GM12878 (cell line): ENCODE measurements at regions of chr11 and their contacts with region 1.

Region 1: GRCh38 chr11:117817368-117818040 is 7.0 kb downstream of the FXYD2 start:
- DNase-seq: peak; percentile 93
- ATAC-seq: peak; percentile 47
- H3K4me3 ChIP-seq: no peak overlapping the region
- H3K27ac ChIP-seq: peak overlapping the region; percentile 87
- H3K4me1 ChIP-seq: peaks cover 55% of the 10 kb centered on the region
- H3K27me3 ChIP-seq: no peaks in the 10 kb centered on the region
- CTCF ChIP-seq: peak; percentile 98 to 100 (median 99)
- EP300 ChIP-seq: no peak; a peak in 1 of 4 replicates
- POLR2A ChIP-seq: peak; percentile 4; the same call in 1 of the 2 replicates
- RAD21 ChIP-seq: peak; percentile 95

Region 2: GRCh38 chr11:117232092-117232878 is 585.2 kb before region 1 on chr11 and contains the start of gene RNF214:
- CTCF ChIA-PET with region 1: interaction called, 4 read pairs
- POLR2A ChIA-PET with region 1: no interaction called
- RAD21 ChIA-PET with region 1: interaction called, 3 read pairs
- SMC1A ChIA-PET with region 1: interaction called, 7 read pairs
- in situ Hi-C with region 1: no loop called
- intact Hi-C with region 1: loop called (anchors 5 kb)
- DNase-seq: peak; percentile 20
- ATAC-seq: peak; percentile 82
- H3K4me3 ChIP-seq: peak within 1 kb of the TSS; percentile 89
- H3K27ac ChIP-seq: peak within 1 kb of the TSS; percentile 87
- H3K4me1 ChIP-seq: peaks cover 9% of the 10 kb centered on the region
- H3K27me3 ChIP-seq: no peaks in the 10 kb centered on the region
- CTCF ChIP-seq: peak; percentile 77 to 88 (median 85); a peak in 5 of 6 replicates
- EP300 ChIP-seq: no peak
- POLR2A ChIP-seq: peak; percentile 77
- RAD21 ChIP-seq: peak; percentile 31; the same call in 1 of the 2 replicates
- polyA plus RNA-seq, gene RNF214: 4.8 to 6.2 TPM

Region 3: DNA sequence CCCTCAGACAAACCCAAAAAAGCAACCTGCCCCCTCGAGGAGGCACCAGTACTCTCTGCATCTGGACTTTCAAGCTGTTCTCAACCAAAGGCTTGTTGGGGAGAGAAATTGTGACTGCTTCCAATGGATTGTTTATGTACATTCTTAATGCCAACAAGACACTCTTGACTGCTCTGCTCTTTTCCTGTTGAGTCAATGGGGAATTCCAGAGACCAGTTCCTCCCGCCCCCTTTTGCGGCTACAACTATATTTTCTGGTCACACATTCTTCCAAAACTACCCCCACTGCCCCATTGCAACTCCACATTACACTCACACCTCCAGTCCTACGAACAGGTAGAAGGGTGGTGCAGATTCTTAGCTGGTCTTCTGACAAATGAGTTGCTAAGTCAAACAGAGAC is 207.5 kb before region 1 on chr11:
- CTCF ChIA-PET with region 1: interaction called, 7 read pairs
- POLR2A ChIA-PET with region 1: interaction called, 5 read pairs
- RAD21 ChIA-PET with region 1: interaction called, 6 read pairs
- SMC1A ChIA-PET with region 1: no interaction called
- in situ Hi-C with region 1: no loop called
- intact Hi-C with region 1: loop called (anchors 5 kb)
- DNase-seq: peak; percentile 70
- ATAC-seq: peak; percentile 47
- H3K4me3 ChIP-seq: peak overlapping the region; percentile 28; the same call in 1 of the 2 replicates
- H3K27ac ChIP-seq: peak overlapping the region; percentile 17; the same call in 1 of the 2 replicates
- H3K4me1 ChIP-seq: peaks cover 37% of the 10 kb centered on the region
- H3K27me3 ChIP-seq: no peaks in the 10 kb centered on the region
- CTCF ChIP-seq: 0 out of 6 replicates have a peak, but pooled peaks of 1 of the 3 experiments have one; percentile 2
- EP300 ChIP-seq: peak in 1 of 2 experiments; percentile 71; a peak in 1 of 4 replicates
- POLR2A ChIP-seq: no peak
- RAD21 ChIP-seq: no peak

Region 4: GRCh38 chr11:117900121-117900648 is 82.7 kb after region 1 on chr11:
- CTCF ChIA-PET with region 1: interaction called, 14 read pairs
- POLR2A ChIA-PET with region 1: no interaction called
- RAD21 ChIA-PET with region 1: interaction called, 10 read pairs
- SMC1A ChIA-PET with region 1: interaction called, 5 read pairs
- in situ Hi-C with region 1: no loop called
- intact Hi-C with region 1: no loop called
- DNase-seq: peak; percentile 60
- ATAC-seq: peak; percentile 93
- H3K4me3 ChIP-seq: no peak overlapping the region
- H3K27ac ChIP-seq: no peak overlapping the region
- H3K4me1 ChIP-seq: peaks cover 4% of the 10 kb centered on the region
- H3K27me3 ChIP-seq: no peaks in the 10 kb centered on the region
- CTCF ChIP-seq: no peak
- EP300 ChIP-seq: no peak
- POLR2A ChIP-seq: no peak
- RAD21 ChIP-seq: no peak

Region 5: DNA sequence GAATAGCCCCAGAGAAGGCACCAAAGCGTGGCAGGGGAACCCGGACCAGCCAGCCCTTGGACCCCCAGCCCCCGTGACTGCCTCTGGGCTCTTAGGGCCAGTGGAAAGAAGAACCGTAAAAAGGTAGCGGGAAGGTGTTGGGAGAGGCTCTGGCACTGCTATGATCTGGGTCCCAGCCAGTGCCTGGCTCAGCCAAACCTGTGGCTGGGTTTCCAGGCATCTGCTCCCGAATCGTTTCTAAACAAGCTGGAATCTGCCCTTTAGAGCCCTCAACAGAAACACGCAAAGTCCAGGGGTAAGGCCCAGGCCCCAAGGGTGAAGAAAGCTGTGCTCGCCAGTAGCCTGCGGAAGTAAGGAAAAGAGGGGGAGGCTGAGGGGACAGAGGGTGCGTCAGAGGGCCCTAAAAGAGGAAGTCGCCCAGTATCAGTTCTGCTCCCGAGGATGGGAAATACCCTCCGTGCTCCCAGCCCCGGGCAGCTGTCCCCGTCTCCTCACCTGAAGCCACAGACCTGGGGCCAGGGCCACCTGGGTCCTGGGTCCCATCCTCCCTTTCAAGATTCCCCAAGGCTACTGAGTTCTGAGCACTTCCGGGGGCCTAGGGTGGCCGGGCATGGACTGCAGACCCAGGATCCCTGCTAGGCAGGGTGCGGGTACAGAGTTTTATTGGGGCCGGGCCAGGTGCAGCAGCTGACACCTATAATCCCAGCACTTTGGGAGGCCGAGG is 193.4 kb after region 1 on chr11:
- CTCF ChIA-PET with region 1: interaction called, 4 read pairs
- POLR2A ChIA-PET with region 1: interaction called, 4 read pairs
- RAD21 ChIA-PET with region 1: interaction called, 8 read pairs
- SMC1A ChIA-PET with region 1: interaction called, 10 read pairs
- in situ Hi-C with region 1: no loop called
- intact Hi-C with region 1: no loop called
- DNase-seq: peak; percentile 86
- ATAC-seq: peak; percentile 85
- H3K4me3 ChIP-seq: no peak overlapping the region
- H3K27ac ChIP-seq: peak overlapping the region; percentile 97
- H3K4me1 ChIP-seq: peaks cover 80% of the 10 kb centered on the region
- H3K27me3 ChIP-seq: no peaks in the 10 kb centered on the region
- CTCF ChIP-seq: no peak
- EP300 ChIP-seq: peak; percentile 100
- POLR2A ChIP-seq: no peak
- RAD21 ChIP-seq: 0 out of 2 replicates have a peak, but pooled peaks have one; percentile 15

Region 6: DNA sequence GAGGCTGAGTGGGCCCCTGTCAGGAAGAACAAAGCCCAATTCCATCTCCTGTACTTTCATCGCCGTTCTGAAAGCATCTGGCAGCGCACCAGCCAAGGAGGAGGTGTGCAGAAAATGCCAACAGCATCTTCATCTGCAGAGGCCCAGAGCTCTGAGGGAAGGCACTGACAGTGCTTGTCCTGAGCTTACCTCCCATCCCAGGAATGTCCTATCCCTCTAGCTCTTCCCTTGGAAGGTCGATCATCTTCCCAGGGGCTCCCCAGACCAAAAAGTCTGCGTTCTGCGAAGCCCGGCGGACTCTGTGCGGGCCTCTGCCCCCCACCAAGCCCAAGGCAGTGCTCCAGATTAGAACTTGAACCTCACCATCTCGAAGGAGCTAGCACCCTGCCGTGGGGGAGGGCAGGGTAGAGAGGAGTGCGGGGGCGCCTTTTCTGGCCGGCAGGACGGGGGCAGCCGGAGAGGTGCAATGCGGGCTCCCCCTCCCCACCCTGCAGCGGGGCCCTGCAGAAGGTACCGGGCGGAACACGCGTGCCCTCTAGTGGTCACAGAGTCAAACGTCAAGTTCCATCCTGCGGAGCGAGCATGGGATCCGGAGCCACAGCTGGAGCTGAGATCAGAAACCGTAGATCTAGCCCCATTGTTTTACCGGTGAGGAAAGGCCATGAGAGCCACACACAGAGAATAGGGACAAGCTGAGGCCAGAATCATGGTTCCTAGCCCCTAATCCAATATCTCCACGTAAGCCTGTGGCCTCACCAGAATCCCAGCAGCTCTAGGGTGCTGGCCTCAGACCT is 354.0 kb after region 1 on chr11:
- CTCF ChIA-PET with region 1: interaction called, 10 read pairs
- POLR2A ChIA-PET with region 1: no interaction called
- RAD21 ChIA-PET with region 1: interaction called, 4 read pairs
- SMC1A ChIA-PET with region 1: no interaction called
- in situ Hi-C with region 1: no loop called
- intact Hi-C with region 1: no loop called
- DNase-seq: no peak
- ATAC-seq: peak; percentile 91
- H3K4me3 ChIP-seq: no peak overlapping the region
- H3K27ac ChIP-seq: no peak overlapping the region
- H3K4me1 ChIP-seq: no peaks in the 10 kb centered on the region
- H3K27me3 ChIP-seq: peaks cover 0 to 3% of the 10 kb centered on the region in 2 experiments; a peak in 2 of 4 replicates
- CTCF ChIP-seq: peak; percentile 86 to 93 (median 88)
- EP300 ChIP-seq: no peak
- POLR2A ChIP-seq: no peak
- RAD21 ChIP-seq: peak; percentile 66